PC-9 (cell line): ENCODE measurements at regions of chr4 and their contacts with region 1.

Region 1: DNA sequence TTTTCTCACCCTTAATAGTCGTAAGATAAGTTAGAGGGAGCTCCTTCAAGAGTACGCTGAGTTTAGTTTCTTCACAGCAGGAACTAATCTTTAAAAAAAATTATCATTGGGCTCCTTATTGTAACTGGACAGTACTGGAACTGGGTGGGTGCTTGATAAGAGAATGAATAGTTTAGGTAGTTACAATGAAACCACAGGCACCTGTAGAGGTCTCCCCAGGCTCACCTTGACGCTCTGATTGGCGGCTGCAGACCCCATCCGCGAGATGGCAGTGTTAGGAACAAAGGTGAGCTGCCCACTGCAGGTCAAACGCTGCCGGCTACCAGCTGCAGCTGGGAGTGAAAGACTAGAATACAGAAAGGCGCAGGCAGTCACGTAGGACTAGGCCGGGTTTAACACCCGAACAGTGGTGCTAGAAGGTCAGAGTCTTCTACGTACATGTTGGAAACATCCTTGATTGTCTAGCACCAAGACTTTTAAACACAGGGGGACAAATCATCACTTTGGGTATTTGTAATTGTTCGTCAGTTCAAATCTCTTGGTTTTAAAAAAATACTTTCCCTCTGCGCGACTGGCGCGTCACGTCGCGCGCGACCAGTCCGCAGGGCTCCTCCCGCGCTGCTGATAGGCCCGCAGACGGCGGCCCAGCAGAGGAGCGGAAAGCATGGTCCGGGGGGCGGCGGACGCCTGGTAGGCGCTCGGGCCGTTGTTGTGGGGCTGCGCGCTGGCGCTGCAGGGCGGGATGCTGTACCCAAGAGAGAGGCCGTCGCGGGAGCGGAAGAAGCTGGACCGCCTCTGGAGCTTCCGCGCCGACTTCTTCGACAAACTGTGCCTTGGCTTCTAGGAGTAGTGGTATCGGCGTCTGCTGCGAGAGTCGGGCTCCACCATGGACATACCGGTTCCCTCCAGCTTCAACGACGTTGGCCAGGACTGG is 45.6 kb downstream of the SMARCA5 start:
- DNase-seq: peak; percentile 67 to 81
- H3K4me3 ChIP-seq: peak overlapping the region; percentile 50; the same call in 1 of the 2 replicates
- H3K27ac ChIP-seq: no peak overlapping the region
- H3K4me1 ChIP-seq: no peaks in the 10 kb centered on the region
- H3K27me3 ChIP-seq: no peaks in the 10 kb centered on the region
- CTCF ChIP-seq: peak; percentile 66; the same call in 1 of the 2 replicates

Region 2: GRCh38 chr4:142345924-142346323 is 1213.2 kb before region 1 on chr4:
- CTCF ChIA-PET with region 1: no interaction called
- POLR2A ChIA-PET with region 1: interaction called, 13 read pairs
- intact Hi-C with region 1: no loop called
- DNase-seq: no peak
- H3K4me3 ChIP-seq: no peak overlapping the region
- H3K27ac ChIP-seq: no peak overlapping the region
- H3K4me1 ChIP-seq: peaks cover 36% of the 10 kb centered on the region
- H3K27me3 ChIP-seq: no peaks in the 10 kb centered on the region
- CTCF ChIP-seq: no peak

Region 3: DNA sequence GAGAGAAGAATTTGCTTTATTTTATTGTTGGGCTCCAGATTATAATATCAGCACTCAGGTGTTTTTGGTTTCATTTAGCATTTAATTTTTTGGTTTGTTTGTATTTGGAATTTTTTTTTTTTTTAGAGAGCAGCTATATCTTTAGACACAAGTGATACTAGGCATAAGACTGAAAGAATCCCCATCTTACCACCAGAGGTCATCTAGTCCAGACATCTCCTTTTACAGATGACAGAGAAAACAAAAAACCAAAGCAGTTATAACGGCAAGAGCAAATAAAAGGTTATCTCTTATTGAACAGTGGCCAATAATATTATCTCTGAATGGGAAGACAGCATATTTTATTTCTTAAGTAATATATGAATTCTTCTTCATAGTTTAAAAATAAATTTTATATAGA is 351.5 kb before region 1 on chr4:
- CTCF ChIA-PET with region 1: no interaction called
- POLR2A ChIA-PET with region 1: no interaction called
- intact Hi-C with region 1: loop called (anchors 10 kb)
- DNase-seq: no peak
- H3K4me3 ChIP-seq: no peak overlapping the region
- H3K27ac ChIP-seq: no peak overlapping the region
- H3K4me1 ChIP-seq: no peaks in the 10 kb centered on the region
- H3K27me3 ChIP-seq: no peaks in the 10 kb centered on the region
- CTCF ChIP-seq: peak; percentile 26; the same call in 1 of the 2 replicates

Region 4: DNA sequence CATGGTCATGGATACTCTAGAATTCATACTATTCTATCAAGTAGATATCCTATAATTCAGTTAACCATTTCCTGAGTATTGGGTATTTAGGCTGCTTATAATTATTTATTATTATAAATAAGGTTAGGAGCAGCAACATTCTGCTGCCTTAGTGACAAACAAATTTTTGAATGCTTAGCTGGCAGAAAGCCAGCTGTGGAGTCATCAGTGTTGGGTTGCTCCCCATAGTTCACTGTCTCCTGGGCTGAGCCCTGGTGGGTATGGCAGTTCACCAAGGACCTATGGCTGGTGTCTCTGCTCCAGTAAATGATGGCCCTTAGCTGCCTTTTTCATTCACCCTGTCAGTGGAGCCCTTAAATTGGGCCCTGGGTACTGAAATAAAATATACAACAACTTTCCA is 16.2 kb after region 1 on chr4:
- CTCF ChIA-PET with region 1: no interaction called
- POLR2A ChIA-PET with region 1: no interaction called
- intact Hi-C with region 1: no loop called
- DNase-seq: no peak
- H3K4me3 ChIP-seq: no peak overlapping the region
- H3K27ac ChIP-seq: no peak overlapping the region
- H3K4me1 ChIP-seq: no peaks in the 10 kb centered on the region
- H3K27me3 ChIP-seq: no peaks in the 10 kb centered on the region
- CTCF ChIP-seq: no peak

Region 5: DNA sequence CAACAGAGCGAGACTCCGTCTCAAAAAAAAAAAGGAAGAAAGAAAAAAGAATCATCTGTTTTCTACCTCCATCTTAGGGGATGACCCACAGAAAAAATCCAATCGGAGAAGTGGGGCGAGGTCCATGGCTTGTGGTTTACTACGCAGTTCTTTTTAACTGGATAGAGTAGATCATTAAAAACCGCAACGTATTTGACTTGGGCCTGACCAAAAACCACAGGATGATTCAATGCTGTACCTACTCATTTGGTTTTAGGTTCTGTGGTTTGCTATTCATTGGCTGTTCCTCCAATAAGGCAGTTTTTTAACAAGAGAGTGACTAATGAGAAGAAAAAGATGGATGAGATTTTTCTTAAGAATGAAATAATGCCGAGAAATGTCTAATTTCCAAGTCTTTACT is 57.7 kb after region 1 on chr4:
- CTCF ChIA-PET with region 1: no interaction called
- POLR2A ChIA-PET with region 1: no interaction called
- intact Hi-C with region 1: no loop called
- DNase-seq: peak in 1 of 2 experiments; percentile 45
- H3K4me3 ChIP-seq: no peak overlapping the region
- H3K27ac ChIP-seq: no peak overlapping the region
- H3K4me1 ChIP-seq: no peaks in the 10 kb centered on the region
- H3K27me3 ChIP-seq: no peaks in the 10 kb centered on the region
- CTCF ChIP-seq: no peak

Region 6: GRCh38 chr4:144141493-144141892 is 582.4 kb after region 1 on chr4:
- CTCF ChIA-PET with region 1: interaction called, 4 read pairs
- POLR2A ChIA-PET with region 1: no interaction called
- intact Hi-C with region 1: loop called (anchors 1 kb)
- DNase-seq: no peak
- H3K4me3 ChIP-seq: no peak overlapping the region
- H3K27ac ChIP-seq: no peak overlapping the region
- H3K4me1 ChIP-seq: no peaks in the 10 kb centered on the region
- H3K27me3 ChIP-seq: no peaks in the 10 kb centered on the region
- CTCF ChIP-seq: no peak